WTC11 (cell line): ENCODE measurements at regions of chr12 and their contacts with region 1.

Region 1: DNA sequence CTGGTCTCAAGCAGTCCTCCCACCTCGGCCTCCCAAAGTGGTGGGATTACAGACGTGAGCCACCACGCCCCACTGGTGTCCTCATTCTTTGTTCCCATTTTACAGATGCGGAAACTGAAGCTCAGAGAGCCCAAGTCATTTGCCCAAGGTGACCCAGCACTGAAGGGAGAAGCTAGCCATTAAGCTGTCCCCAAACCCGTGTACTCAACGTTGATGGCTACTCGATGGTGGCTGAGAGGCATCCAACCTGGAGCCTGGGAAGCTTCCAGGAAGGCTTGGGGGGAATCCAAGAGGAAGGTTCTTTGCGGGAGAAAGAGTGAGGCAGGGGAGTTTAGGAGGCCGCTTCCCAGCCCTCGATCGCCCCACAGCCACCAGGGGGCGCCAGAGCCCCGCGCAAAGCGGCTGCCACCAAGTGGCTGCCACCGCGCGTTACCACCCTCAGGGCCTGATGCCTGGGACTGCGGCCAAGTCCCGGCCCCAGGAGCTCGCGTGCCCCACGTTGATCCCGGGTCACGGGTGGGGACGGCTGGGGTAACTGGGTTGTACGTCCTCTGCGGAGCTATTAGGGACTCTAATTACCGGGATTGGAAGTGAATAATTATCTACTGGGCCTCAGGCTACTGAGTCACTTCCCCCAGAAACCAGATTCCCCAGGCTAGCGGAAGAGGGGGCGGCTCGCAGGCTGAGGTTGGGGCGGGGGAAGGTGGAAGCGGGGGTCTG is 8.8 kb upstream of the SH2B3 start:
- DNase-seq: peak; percentile 89
- ATAC-seq: peak; percentile 93
- H3K4me3 Mint-ChIP-seq: peak overlapping the region; percentile 48
- H3K27ac Mint-ChIP-seq: no peak overlapping the region
- H3K4me1 Mint-ChIP-seq: no peaks in the 10 kb centered on the region
- H3K27me3 Mint-ChIP-seq: no peaks in the 10 kb centered on the region; the same call in 1 of the 2 replicates
- CTCF ChIP-seq: peak; percentile 99

Region 2: GRCh38 chr12:110756611-110757010 is 640.3 kb before region 1 on chr12:
- CTCF ChIA-PET with region 1: no interaction called
- POLR2A ChIA-PET with region 1: interaction called, 10 read pairs
- DNase-seq: no peak
- ATAC-seq: no peak
- H3K4me3 Mint-ChIP-seq: no peak overlapping the region
- H3K27ac Mint-ChIP-seq: no peak overlapping the region
- H3K4me1 Mint-ChIP-seq: peaks cover 4% of the 10 kb centered on the region; the same call in 1 of the 2 replicates
- H3K27me3 Mint-ChIP-seq: no peaks in the 10 kb centered on the region
- CTCF ChIP-seq: no peak

Region 3: GRCh38 chr12:111368788-111369495 is 27.9 kb before region 1 on chr12 and contains the start of gene PHETA1:
- CTCF ChIA-PET with region 1: interaction called, 35 read pairs
- POLR2A ChIA-PET with region 1: no interaction called
- DNase-seq: peak; percentile 95
- ATAC-seq: peak; percentile 94
- H3K4me3 Mint-ChIP-seq: peak within 1 kb of the TSS; percentile 72
- H3K27ac Mint-ChIP-seq: 0 out of 2 replicates have a peak within 1 kb of the TSS, but pooled peaks have one; percentile 27
- H3K4me1 Mint-ChIP-seq: peaks cover 10% of the 10 kb centered on the region
- H3K27me3 Mint-ChIP-seq: peaks cover 30% of the 10 kb centered on the region
- CTCF ChIP-seq: no peak
- total RNA-seq, gene PHETA1: 12.4 to 18.6 TPM (median 14.9 TPM) in 3 replicates

Region 4: DNA sequence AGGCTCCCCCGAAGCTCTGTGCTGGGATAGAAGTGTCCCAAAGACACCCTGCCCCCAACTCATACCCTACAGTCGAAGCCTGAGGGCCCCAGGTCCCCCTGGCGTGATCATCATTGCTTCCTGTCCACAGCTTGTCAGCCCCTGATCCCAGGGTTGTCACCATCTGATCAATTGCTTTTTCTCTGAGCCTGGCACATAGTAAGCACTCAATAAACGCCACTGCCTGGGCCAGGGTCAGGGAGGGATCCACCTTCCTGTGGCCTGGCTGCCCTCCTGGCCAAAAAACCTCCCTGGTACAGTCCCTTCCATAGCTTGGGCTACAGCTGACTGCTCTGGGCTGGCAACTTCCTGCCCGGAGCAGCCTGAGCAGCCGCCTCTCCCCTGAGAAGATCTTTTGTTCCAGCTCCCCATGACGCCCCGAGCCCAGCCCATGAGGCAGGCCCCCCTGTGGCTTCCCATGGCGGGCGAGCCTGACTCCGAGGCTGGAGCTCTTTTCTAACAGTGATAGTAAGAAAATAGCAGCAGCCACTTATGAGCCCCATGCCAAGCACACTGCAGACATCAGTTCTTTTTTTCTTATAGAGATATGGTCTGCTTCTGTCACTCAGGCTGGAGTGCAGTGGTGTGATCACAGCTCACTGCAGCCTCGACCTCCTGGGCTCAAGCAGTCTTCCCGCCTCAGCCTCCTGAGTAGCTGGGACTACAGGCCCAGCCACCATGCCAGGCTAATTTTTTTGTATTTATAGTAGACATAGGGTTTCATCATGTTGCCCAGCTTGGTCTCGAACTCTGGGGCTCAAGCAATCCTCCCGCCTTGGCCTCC is 15.3 kb after region 1 on chr12:
- CTCF ChIA-PET with region 1: interaction called, 41 read pairs
- POLR2A ChIA-PET with region 1: no interaction called
- DNase-seq: peak; percentile 63
- ATAC-seq: peak; percentile 73
- H3K4me3 Mint-ChIP-seq: peak overlapping the region; percentile 11; the same call in 1 of the 2 replicates
- H3K27ac Mint-ChIP-seq: peak overlapping the region; percentile 58
- H3K4me1 Mint-ChIP-seq: peaks cover 67% of the 10 kb centered on the region
- H3K27me3 Mint-ChIP-seq: no peaks in the 10 kb centered on the region
- CTCF ChIP-seq: no peak

Region 5: DNA sequence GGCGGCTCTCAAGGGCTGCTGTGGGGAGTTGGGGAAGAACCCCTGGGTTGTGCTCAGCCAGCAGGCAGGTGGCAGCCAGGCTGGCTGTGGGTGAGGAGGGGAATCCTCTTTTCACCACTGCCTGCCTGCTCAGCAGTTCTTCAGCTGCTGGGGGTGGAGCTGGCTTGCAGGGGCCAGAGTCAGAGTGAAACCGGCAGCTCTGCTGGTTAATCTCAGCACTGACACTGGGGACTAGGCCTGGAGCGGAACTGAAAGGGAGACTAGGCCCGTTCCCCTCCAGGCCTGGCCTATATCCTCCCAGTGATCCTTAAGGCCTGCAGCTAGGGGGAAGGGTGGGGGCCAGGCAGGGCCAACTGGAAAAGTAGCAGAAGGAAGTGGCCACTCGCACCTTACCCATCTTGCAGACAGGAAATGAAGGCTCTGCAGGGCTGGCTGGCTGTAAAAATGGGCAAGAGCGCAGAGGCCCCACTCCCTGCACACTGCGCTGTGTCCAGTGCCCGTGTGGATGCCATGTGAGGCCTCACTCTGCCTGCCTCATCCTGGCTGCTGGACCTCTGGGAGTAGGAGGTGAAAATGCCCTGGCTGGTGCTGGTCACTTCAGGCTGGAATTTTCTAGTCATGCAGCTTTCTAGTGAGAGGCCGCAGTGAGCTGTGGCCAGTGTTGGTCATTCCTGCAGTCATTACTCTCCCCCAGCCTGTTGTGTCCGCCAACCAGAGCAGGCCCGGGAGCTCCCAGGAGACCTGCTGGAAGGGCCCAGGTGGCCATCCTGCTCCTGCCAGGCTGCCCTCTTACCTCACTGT is 48.2 kb after region 1 on chr12:
- CTCF ChIA-PET with region 1: interaction called, 116 read pairs
- POLR2A ChIA-PET with region 1: no interaction called
- DNase-seq: no peak
- ATAC-seq: peak; percentile 25
- H3K4me3 Mint-ChIP-seq: no peak overlapping the region
- H3K27ac Mint-ChIP-seq: peak overlapping the region; percentile 94
- H3K4me1 Mint-ChIP-seq: peaks cover 22% of the 10 kb centered on the region
- H3K27me3 Mint-ChIP-seq: no peaks in the 10 kb centered on the region
- CTCF ChIP-seq: no peak

Region 6: GRCh38 chr12:111529424-111530368 is 132.8 kb after region 1 on chr12:
- CTCF ChIA-PET with region 1: interaction called, 25 read pairs
- POLR2A ChIA-PET with region 1: no interaction called
- DNase-seq: peak; percentile 69
- ATAC-seq: peak; percentile 95
- H3K4me3 Mint-ChIP-seq: no peak overlapping the region
- H3K27ac Mint-ChIP-seq: peak overlapping the region; percentile 20
- H3K4me1 Mint-ChIP-seq: peaks cover 10% of the 10 kb centered on the region
- H3K27me3 Mint-ChIP-seq: no peaks in the 10 kb centered on the region
- CTCF ChIP-seq: peak; percentile 46; the same call in 1 of the 2 replicates

Region 7: GRCh38 chr12:111570084-111570961 is 173.4 kb after region 1 on chr12:
- CTCF ChIA-PET with region 1: no interaction called
- POLR2A ChIA-PET with region 1: no interaction called
- DNase-seq: no peak
- ATAC-seq: no peak
- H3K4me3 Mint-ChIP-seq: no peak overlapping the region
- H3K27ac Mint-ChIP-seq: 0 out of 2 replicates have a peak overlapping the region, but pooled peaks have one; percentile 2
- H3K4me1 Mint-ChIP-seq: peaks cover 19% of the 10 kb centered on the region
- H3K27me3 Mint-ChIP-seq: no peaks in the 10 kb centered on the region
- CTCF ChIP-seq: no peak

Region 8: GRCh38 chr12:111624540-111624939 is 227.7 kb after region 1 on chr12:
- CTCF ChIA-PET with region 1: no interaction called
- POLR2A ChIA-PET with region 1: no interaction called
- DNase-seq: no peak
- ATAC-seq: no peak
- H3K4me3 Mint-ChIP-seq: no peak overlapping the region
- H3K27ac Mint-ChIP-seq: 0 out of 2 replicates have a peak overlapping the region, but pooled peaks have one; percentile 13
- H3K4me1 Mint-ChIP-seq: no peaks in the 10 kb centered on the region
- H3K27me3 Mint-ChIP-seq: no peaks in the 10 kb centered on the region
- CTCF ChIP-seq: no peak